B cell (primary cell): ENCODE measurements at regions of chr7 and their contacts with region 1.

Region 1: DNA sequence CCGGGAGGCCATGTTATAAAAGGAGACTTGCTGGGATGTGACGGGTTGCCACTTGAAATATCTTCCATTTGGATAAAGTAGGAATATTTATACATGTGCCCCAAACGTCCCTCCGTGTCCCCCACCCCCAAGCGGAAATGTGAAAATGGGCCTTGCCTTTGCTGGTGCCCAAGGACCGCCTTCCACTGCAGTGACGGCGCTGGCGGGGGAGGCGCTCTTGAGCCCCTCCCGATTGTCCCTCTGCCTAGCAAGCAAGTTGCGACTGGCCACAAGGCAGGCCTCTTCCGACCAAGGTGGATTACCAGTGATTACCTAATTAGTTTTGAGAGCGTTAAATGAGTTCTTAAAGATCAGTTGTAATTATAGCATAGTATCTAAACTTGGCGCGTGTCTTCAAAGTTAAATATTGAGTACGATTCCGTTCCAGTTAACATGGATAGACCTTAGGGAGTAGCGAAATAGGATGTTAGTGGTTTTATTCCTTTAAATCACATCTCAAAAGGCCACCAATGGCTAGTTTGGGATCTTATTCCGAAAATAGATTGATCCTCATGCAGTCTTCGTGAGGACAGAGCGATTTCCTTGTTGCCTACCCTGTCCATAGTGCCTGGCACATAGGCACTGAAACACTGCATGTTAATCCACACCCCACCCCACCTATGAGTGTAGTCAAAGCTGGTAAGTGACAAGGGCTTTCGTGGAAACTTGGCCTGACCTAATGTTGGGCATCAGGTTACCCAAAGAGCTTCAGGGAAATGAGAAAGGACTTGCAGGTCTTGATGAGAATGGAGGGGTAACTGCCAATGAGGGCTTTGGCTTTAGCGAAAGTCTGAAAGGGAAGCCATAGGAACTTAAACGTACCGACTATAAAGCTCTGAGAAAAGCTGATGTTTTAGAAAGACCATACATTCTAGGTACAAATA is 1.1 kb downstream of the PPIA start:
- DNase-seq: peak; percentile 87
- ATAC-seq: peak; percentile 49
- H3K4me3 ChIP-seq: peak overlapping the region; percentile 77 to 98 (median 93)
- H3K4me3 Mint-ChIP-seq: peak overlapping the region; percentile 93
- H3K27ac ChIP-seq: peak overlapping the region; percentile 92 to 97
- H3K27ac Mint-ChIP-seq: peak overlapping the region; percentile 98
- H3K4me1 ChIP-seq: peaks cover 15 to 26% of the 10 kb centered on the region in 2 donors
- H3K4me1 Mint-ChIP-seq: peaks cover 40% of the 10 kb centered on the region
- H3K27me3 ChIP-seq: no peaks in the 10 kb centered on the region
- H3K27me3 Mint-ChIP-seq: no peaks in the 10 kb centered on the region
- CTCF ChIP-seq: peak; percentile 73

Region 2: GRCh38 chr7:43925984-43926797 is 871.4 kb before region 1 on chr7 and contains the start of gene UBE2D4:
- CTCF ChIA-PET with region 1: no interaction called
- POLR2A ChIA-PET with region 1: no interaction called
- intact Hi-C with region 1: loop called (anchors 5 kb)
- DNase-seq: peak; percentile 93
- ATAC-seq: peak; percentile 87
- H3K4me3 ChIP-seq: peak within 1 kb of the TSS; percentile 53 to 85 (median 72)
- H3K4me3 Mint-ChIP-seq: peak within 1 kb of the TSS; percentile 95
- H3K27ac ChIP-seq: peak within 1 kb of the TSS; percentile 87 to 94
- H3K27ac Mint-ChIP-seq: peak within 1 kb of the TSS; percentile 96
- H3K4me1 ChIP-seq: peaks cover 8 to 21% of the 10 kb centered on the region in 2 donors
- H3K4me1 Mint-ChIP-seq: peaks cover 18% of the 10 kb centered on the region
- H3K27me3 ChIP-seq: no peaks in the 10 kb centered on the region
- H3K27me3 Mint-ChIP-seq: no peaks in the 10 kb centered on the region
- CTCF ChIP-seq: no peak
- total RNA-seq, gene UBE2D4: 9.4 and 11.4 TPM in 2 replicates

Region 3: GRCh38 chr7:44606450-44607254 is 190.9 kb before region 1 on chr7 and contains the start of gene OGDH:
- CTCF ChIA-PET with region 1: no interaction called
- POLR2A ChIA-PET with region 1: interaction called, 5 read pairs
- intact Hi-C with region 1: loop called (anchors 1 kb)
- DNase-seq: peak; percentile 100
- ATAC-seq: peak; percentile 91
- H3K4me3 ChIP-seq: peak within 1 kb of the TSS; percentile 80 to 93 (median 85)
- H3K4me3 Mint-ChIP-seq: peak within 1 kb of the TSS; percentile 99
- H3K27ac ChIP-seq: peak within 1 kb of the TSS; percentile 87 to 96
- H3K27ac Mint-ChIP-seq: peak within 1 kb of the TSS; percentile 99
- H3K4me1 ChIP-seq: peaks cover 15 to 34% of the 10 kb centered on the region in 2 donors
- H3K4me1 Mint-ChIP-seq: peaks cover 41% of the 10 kb centered on the region
- H3K27me3 ChIP-seq: no peaks in the 10 kb centered on the region
- H3K27me3 Mint-ChIP-seq: peaks cover 4% of the 10 kb centered on the region
- CTCF ChIP-seq: no peak
- total RNA-seq, gene OGDH: 71.5 and 80.2 TPM in 2 replicates

Region 4: GRCh38 chr7:44700322-44700721 is 97.3 kb before region 1 on chr7:
- CTCF ChIA-PET with region 1: interaction called, 3 read pairs
- POLR2A ChIA-PET with region 1: no interaction called
- intact Hi-C with region 1: loop called (anchors 5 kb)
- DNase-seq: no peak
- ATAC-seq: no peak
- H3K4me3 ChIP-seq: no peak overlapping the region
- H3K4me3 Mint-ChIP-seq: no peak overlapping the region
- H3K27ac ChIP-seq: no peak overlapping the region
- H3K27ac Mint-ChIP-seq: peak overlapping the region; percentile 20
- H3K4me1 ChIP-seq: no peaks in the 10 kb centered on the region
- H3K4me1 Mint-ChIP-seq: no peaks in the 10 kb centered on the region
- H3K27me3 ChIP-seq: no peaks in the 10 kb centered on the region
- H3K27me3 Mint-ChIP-seq: no peaks in the 10 kb centered on the region
- CTCF ChIP-seq: no peak

Region 5: GRCh38 chr7:44787041-44787440 is 10.5 kb before region 1 on chr7:
- CTCF ChIA-PET with region 1: no interaction called
- POLR2A ChIA-PET with region 1: no interaction called
- intact Hi-C with region 1: no loop called
- DNase-seq: peak; percentile 76
- ATAC-seq: peak; percentile 91
- H3K4me3 ChIP-seq: no peak overlapping the region
- H3K4me3 Mint-ChIP-seq: peak overlapping the region; percentile 45
- H3K27ac ChIP-seq: peak overlapping the region; percentile 55 to 67
- H3K27ac Mint-ChIP-seq: peak overlapping the region; percentile 77
- H3K4me1 ChIP-seq: peaks cover 9 to 16% of the 10 kb centered on the region in 2 donors
- H3K4me1 Mint-ChIP-seq: peaks cover 13% of the 10 kb centered on the region
- H3K27me3 ChIP-seq: no peaks in the 10 kb centered on the region
- H3K27me3 Mint-ChIP-seq: no peaks in the 10 kb centered on the region
- CTCF ChIP-seq: no peak

Region 6: DNA sequence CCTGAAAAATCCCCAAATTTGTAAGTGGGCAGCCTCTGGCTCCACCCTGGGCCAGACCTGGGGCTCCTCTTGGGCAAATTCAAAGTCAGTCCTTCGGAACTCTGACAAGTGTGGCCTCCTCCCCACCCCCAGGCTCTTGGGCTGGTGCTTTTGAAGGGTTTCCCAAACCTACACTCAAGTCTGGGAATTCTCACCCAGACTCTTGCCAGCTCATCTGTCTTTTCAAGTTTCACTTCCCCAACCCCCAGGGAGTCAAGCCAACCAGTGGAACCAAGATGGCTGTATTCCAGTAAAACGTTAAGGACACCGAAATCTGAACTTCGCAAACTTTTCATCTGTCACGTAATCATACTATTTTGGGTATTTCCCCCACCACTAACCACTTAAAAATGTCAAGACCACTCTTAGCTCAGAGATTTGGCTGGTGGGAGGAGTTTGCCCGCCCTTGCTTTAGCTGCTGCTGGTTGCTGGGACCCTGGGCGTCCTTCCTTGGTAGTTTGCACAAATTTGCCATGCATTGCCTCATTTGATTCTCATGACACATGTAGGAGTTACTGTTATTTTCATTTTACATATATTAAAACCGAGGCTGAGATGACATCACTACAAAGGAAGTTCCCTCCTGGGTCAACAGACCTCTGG is 182.9 kb after region 1 on chr7:
- CTCF ChIA-PET with region 1: no interaction called
- POLR2A ChIA-PET with region 1: no interaction called
- intact Hi-C with region 1: loop called (anchors 2 kb)
- DNase-seq: peak; percentile 88
- ATAC-seq: peak; percentile 46
- H3K4me3 ChIP-seq: peak overlapping the region in 2 of 5 experiments; percentile 1 to 90
- H3K4me3 Mint-ChIP-seq: peak overlapping the region; percentile 97
- H3K27ac ChIP-seq: peak overlapping the region; percentile 79 to 93
- H3K27ac Mint-ChIP-seq: peak overlapping the region; percentile 98
- H3K4me1 ChIP-seq: peaks cover 53 to 75% of the 10 kb centered on the region in 2 donors
- H3K4me1 Mint-ChIP-seq: peaks cover 86% of the 10 kb centered on the region
- H3K27me3 ChIP-seq: no peaks in the 10 kb centered on the region
- H3K27me3 Mint-ChIP-seq: no peaks in the 10 kb centered on the region
- CTCF ChIP-seq: no peak

Region 7: GRCh38 chr7:45111298-45112223 is 314.0 kb after region 1 on chr7 and contains the start of gene TBRG4:
- CTCF ChIA-PET with region 1: interaction called, 3 read pairs
- POLR2A ChIA-PET with region 1: no interaction called
- intact Hi-C with region 1: loop called (anchors 1 kb)
- DNase-seq: peak; percentile 96
- ATAC-seq: peak; percentile 94
- H3K4me3 ChIP-seq: peak within 1 kb of the TSS; percentile 67 to 93 (median 72)
- H3K4me3 Mint-ChIP-seq: peak within 1 kb of the TSS; percentile 91
- H3K27ac ChIP-seq: peak within 1 kb of the TSS; percentile 91 to 98
- H3K27ac Mint-ChIP-seq: peak within 1 kb of the TSS; percentile 95
- H3K4me1 ChIP-seq: peaks cover 22 to 38% of the 10 kb centered on the region in 2 donors
- H3K4me1 Mint-ChIP-seq: peaks cover 40% of the 10 kb centered on the region
- H3K27me3 ChIP-seq: no peaks in the 10 kb centered on the region
- H3K27me3 Mint-ChIP-seq: no peaks in the 10 kb centered on the region
- CTCF ChIP-seq: no peak
- total RNA-seq, gene TBRG4: 111 and 116 TPM in 2 replicates